Esophagus muscularis mucosa (tissue), 4 donors: ENCODE measurements at regions of chr3 and their contacts with region 1.

Region 1: DNA sequence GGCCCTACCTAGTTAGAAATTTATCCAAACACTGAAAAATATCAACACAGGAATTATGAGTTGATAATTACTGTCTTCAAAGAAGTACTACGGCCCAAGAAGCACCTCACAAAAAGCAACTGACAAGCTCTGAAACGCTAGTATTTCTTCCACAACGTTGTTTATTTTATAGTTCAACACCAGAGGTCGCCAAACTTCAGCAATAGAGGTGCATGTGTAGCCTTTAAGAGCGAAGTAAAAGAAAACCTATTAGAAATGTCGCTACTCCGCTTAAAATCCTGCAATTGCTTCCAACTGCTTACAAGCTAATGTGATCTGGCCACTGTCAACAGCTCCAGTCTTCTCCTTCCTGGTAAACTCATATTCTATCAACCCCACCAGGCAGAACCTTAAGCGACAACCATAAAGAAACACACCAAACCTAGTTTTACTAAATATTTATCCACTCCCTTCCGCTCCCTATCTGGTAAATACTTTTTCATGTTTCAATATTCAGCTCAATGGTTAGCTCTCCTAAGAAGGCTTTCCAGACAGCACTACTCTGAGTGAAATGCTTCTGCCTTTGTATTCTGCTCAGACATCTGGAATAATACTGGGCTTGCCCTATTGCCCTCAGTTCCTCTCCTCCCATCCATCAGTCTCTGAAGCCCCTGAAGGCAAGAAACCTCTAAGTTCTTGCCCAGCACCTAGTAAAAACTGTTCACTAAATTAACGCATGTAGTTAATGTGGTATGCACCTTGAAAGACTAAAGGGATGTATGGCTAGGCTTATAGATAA is 110.2 kb downstream of the NR1I2 start:
- DNase-seq: no peak
- H3K4me3 ChIP-seq: no peak overlapping the region
- H3K27ac ChIP-seq: no peak overlapping the region
- H3K4me1 ChIP-seq: peaks cover 0 to 10% (median 8%) of the 10 kb centered on the region in 4 donors
- H3K27me3 ChIP-seq: no peaks in the 10 kb centered on the region
- CTCF ChIP-seq: peak; percentile 64 to 73 (median 71)
- EP300 ChIP-seq: no peak
- POLR2A ChIP-seq: no peak

Region 2: GRCh38 chr3:119662604-119663373 is 229.3 kb before region 1 on chr3:
- intact Hi-C with region 1: no loop called
- DNase-seq: no peak
- H3K4me3 ChIP-seq: peak overlapping the region in 1 of 4 donors; percentile 2
- H3K27ac ChIP-seq: peak overlapping the region; percentile 48 to 82 (median 78)
- H3K4me1 ChIP-seq: peaks cover 32 to 67% (median 59%) of the 10 kb centered on the region in 4 donors
- H3K27me3 ChIP-seq: no peaks in the 10 kb centered on the region
- CTCF ChIP-seq: peak; percentile 7 to 41 (median 24)
- EP300 ChIP-seq: no peak
- POLR2A ChIP-seq: no peak

Region 3: DNA sequence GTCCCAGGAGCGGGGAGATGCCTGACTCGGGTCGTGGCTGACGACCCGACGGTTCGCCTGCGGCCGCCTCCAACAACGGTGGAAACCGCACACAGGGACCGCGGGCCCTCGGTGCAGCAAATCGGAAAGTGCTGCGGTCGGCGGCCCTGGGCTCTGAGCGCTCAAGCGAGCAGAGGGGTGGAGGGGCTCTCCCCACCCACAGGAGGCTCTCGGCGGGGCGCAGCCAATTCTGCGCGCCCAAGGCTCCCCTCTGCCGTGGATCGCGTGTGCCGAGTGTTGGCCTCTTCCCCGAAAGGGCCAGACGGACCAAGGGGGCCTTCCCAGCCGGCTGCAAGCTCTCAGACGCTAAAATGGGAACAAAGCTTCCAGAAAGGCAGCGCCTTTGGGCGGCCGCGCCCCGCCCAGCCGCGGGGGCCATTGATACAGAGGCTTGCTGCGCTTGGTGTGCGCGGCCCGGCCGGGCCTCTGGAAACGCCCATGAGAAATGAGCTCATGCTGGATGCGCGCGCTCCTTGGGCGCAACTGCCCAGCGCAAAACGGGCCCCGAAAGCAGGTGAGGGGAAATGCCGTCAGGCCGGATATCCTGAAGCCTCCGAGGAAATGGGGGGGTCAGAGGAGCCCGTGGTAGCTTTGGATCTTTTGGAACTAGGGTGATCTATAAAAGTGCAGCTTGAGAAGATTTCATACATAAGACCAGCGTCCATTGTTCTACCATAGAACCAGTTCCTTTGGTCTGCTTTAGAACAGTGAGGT is 203.3 kb after region 1 on chr3:
- intact Hi-C with region 1: loop called (anchors 5 kb)
- DNase-seq: peak; percentile 97
- H3K4me3 ChIP-seq: peak overlapping the region; percentile 86 to 90 (median 88)
- H3K27ac ChIP-seq: peak overlapping the region; percentile 99 to 100 (median 99)
- H3K4me1 ChIP-seq: peaks cover 9 to 31% (median 26%) of the 10 kb centered on the region in 4 donors
- H3K27me3 ChIP-seq: no peaks in the 10 kb centered on the region
- CTCF ChIP-seq: no peak
- EP300 ChIP-seq: no peak
- POLR2A ChIP-seq: peak; percentile 89

Region 4: GRCh38 chr3:120182724-120183524 is 290.8 kb after region 1 on chr3:
- intact Hi-C with region 1: loop called (anchors 2 kb)
- DNase-seq: peak; percentile 55
- H3K4me3 ChIP-seq: no peak overlapping the region
- H3K27ac ChIP-seq: no peak overlapping the region
- H3K4me1 ChIP-seq: no peaks in the 10 kb centered on the region
- H3K27me3 ChIP-seq: no peaks in the 10 kb centered on the region
- CTCF ChIP-seq: peak; percentile 26 to 43 (median 39)
- EP300 ChIP-seq: no peak
- POLR2A ChIP-seq: no peak

Region 5: DNA sequence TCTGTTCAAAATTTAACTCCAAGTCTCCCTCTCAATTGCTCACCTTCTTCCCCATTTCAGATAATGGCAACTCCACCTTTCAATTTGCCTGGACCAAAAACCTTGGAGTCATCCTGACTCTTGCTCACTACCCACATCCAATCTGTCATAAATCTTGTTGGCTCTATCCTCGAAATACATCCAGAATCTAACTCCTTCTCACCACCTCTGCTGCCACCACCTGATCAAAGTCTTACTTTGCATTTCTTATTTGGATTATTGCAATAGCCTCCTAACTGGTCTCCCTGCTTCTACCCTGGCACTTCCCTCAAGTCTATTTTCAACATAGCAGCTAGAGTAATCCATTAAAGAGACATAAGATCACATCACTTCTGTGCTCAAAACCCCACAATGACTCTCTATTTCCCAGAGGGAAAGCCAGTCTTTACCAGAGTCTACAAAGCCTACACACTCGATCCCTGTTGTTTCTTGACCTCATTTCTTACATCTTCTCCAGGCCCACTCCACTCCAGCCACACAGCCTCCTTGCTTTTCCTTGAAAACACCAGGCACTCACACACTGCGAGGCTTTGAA is 306.3 kb after region 1 on chr3:
- intact Hi-C with region 1: loop called (anchors 5 kb)
- DNase-seq: no peak
- H3K4me3 ChIP-seq: no peak overlapping the region
- H3K27ac ChIP-seq: no peak overlapping the region
- H3K4me1 ChIP-seq: peaks cover 10 to 13% (median 12%) of the 10 kb centered on the region in 4 donors
- H3K27me3 ChIP-seq: no peaks in the 10 kb centered on the region
- CTCF ChIP-seq: peak; percentile 14 to 24 (median 18)
- EP300 ChIP-seq: no peak
- POLR2A ChIP-seq: no peak